ENCODE measurements at regions of chr18 and their contacts with region 1.

Region 1: GRCh38 chr18:2641638-2642037 is 13.9 kb upstream of the SMCHD1 start:
- DNase-seq: no peak
- H3K4me3 ChIP-seq: peak overlapping the region in 4 of 8 donors; percentile 3 to 41 (median 16)
- H3K27ac ChIP-seq: peak overlapping the region; percentile 55 to 100 (median 98)
- H3K4me1 ChIP-seq: peaks cover 14 to 93% (median 56%) of the 10 kb centered on the region in 6 donors
- H3K27me3 ChIP-seq: no peaks in the 10 kb centered on the region
- CTCF ChIP-seq: no peak
- POLR2A ChIP-seq: no peak

Region 2: DNA sequence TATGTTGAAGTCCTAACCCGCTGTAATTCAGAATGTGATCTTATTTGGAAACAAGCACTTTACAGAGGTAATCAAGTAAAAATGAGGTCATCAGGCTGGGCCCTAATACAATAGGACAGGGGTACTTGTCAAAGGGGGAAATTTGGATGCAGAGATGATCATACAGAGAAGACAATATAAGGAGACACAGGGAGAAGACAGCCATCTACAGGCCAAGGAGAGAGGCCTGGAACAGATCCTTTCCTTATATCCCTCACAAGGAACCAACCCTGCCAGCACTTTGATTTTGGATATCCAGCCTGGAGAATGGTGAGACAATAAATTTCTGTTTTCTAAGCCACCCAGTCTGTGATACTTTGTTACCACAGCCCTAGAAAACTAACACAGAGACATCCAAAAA is 174.7 kb before region 1 on chr18:
- intact Hi-C with region 1: no loop called
- DNase-seq: no peak
- H3K4me3 ChIP-seq: no peak overlapping the region
- H3K27ac ChIP-seq: no peak overlapping the region
- H3K4me1 ChIP-seq: no peaks in the 10 kb centered on the region
- H3K27me3 ChIP-seq: no peaks in the 10 kb centered on the region
- CTCF ChIP-seq: no peak
- POLR2A ChIP-seq: no peak

Region 3: DNA sequence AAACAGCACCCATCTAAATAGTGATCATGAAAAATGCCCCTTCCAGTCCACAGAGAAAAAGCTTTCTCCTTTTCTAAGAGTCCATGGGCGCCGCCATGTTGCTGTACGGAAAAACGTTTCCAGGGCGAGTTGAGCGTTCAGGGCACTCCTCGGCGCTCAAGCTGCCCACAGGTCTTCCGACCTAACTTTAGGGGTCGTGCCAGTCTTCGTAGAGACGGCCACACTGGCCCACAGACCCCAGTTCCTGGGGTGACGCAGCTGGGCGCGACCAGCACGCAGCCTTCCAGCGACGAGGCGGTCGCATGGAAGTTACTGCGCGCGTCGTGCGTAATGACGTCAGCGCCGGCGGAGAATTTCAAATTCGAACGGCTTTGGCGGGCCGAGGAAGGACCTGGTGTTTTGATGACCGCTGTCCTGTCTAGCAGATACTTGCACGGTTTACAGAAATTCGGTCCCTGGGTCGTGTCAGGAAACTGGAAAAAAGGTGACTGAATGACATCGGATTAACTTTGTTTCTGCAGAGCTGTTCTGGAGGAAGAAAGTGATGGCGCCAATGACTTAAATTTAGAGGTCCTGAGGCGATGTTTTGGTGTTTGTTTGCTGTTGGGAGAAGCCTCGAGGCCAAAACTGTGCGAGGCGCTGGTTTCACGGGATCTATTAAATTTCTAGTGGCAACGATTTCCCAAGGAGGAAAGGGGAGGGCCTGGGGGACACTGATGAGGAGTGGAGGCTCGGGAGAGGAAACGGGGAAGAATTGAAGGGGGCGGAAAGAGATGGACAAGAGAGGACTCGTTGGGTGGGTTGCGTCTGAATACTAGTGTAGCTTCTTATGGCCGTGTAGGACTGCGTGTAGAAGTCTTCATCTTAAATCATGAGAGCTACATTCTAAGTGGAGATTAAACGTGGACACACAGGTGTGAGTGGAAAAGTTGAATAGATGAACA is 70.2 kb before region 1 on chr18 and contains the starts of genes METTL4 and NDC80:
- intact Hi-C with region 1: loop called (anchors 10 kb)
- DNase-seq: peak; percentile 96
- H3K4me3 ChIP-seq: peak within 1 kb of the TSS; percentile 59 to 84 (median 63)
- H3K27ac ChIP-seq: peak within 1 kb of the TSS; percentile 93 to 99 (median 96)
- H3K4me1 ChIP-seq: peaks cover 16 to 68% (median 33%) of the 10 kb centered on the region in 6 donors
- H3K27me3 ChIP-seq: no peaks in the 10 kb centered on the region
- CTCF ChIP-seq: peak in 3 of 11 experiments; percentile 4 to 20 (median 17)
- POLR2A ChIP-seq: no peak
- total RNA-seq, gene METTL4: 12.5 to 30.8 (median 16.9) TPM
- total RNA-seq, gene NDC80: 3.4 to 7.3 (median 4.4) TPM